Gastrocnemius medialis (tissue), 4 donors: ENCODE measurements at regions of chr15 and their contacts with region 1.

Region 1: GRCh38 chr15:71443538-71443937 is 328.3 kb downstream of the THSD4 start:
- DNase-seq: peak in 1 of 2 donors; percentile 21
- ATAC-seq: peak in 1 of 2 donors; percentile 21
- H3K4me3 ChIP-seq: no peak overlapping the region
- H3K27ac ChIP-seq: no peak overlapping the region
- H3K4me1 ChIP-seq: peaks cover 0 to 3% of the 10 kb centered on the region in 2 donors
- H3K27me3 ChIP-seq: no peaks in the 10 kb centered on the region
- CTCF ChIP-seq: peak; percentile 63 to 85 (median 72)
- POLR2A ChIP-seq: no peak

Region 2: DNA sequence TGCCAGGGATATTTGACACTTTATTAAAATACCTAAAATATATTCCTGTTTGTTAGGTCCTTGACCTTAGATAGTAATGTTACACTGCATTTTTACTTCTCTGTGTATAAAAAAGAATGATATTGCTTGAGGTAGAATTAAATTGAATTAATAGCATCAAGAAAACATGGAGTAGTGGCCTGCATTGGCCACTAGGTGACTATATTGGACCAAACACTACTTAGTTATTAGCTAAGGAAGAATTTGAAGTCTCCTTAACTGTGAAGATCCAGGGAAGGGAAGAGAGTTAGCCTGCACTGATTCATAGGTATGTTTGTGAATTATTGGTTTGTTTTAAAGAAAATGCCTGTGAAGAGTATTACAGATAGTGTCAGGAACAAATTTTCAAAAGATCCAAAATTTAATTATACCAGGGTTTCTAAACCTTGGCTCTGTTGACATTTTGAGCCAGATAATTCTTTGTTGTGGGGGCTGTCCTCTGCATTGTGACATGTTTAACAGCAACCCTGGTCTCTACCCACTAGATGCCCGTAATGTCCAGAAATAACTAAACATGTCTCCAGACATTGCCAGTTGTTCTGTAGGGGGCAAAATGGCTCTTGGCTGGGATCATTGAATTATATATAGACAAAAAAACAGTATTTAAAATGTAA is 431.9 kb before region 1 on chr15:
- in situ Hi-C with region 1: no loop called
- intact Hi-C with region 1: loop called (anchors 2 kb)
- DNase-seq: no peak
- ATAC-seq: no peak
- H3K4me3 ChIP-seq: no peak overlapping the region
- H3K27ac ChIP-seq: no peak overlapping the region
- H3K4me1 ChIP-seq: no peaks in the 10 kb centered on the region
- H3K27me3 ChIP-seq: no peaks in the 10 kb centered on the region
- CTCF ChIP-seq: peak; percentile 21 to 61 (median 37)
- POLR2A ChIP-seq: no peak

Region 3: DNA sequence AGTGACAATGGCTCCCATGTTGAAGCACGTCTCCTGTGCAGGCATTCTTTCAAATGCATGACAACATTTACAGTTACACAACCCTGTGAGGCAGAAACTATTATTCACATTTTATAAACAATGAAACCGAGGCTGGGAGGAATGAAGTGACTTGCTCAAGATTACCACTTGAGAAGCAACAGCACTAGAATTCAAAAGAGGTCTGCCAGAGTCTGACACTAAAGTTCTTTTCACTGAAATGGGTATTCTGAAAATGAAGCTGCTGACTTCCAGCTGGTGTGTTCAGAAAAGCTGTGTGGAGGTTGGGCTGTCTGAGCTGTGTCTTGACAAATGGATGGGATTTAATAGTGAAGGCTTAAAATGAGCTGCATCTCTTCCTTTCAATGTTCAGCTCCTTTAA is 223.9 kb before region 1 on chr15:
- in situ Hi-C with region 1: no loop called
- intact Hi-C with region 1: loop called (anchors 5 kb)
- DNase-seq: no peak
- ATAC-seq: no peak
- H3K4me3 ChIP-seq: no peak overlapping the region
- H3K27ac ChIP-seq: no peak overlapping the region
- H3K4me1 ChIP-seq: no peaks in the 10 kb centered on the region
- H3K27me3 ChIP-seq: no peaks in the 10 kb centered on the region
- CTCF ChIP-seq: no peak
- POLR2A ChIP-seq: no peak

Region 4: DNA sequence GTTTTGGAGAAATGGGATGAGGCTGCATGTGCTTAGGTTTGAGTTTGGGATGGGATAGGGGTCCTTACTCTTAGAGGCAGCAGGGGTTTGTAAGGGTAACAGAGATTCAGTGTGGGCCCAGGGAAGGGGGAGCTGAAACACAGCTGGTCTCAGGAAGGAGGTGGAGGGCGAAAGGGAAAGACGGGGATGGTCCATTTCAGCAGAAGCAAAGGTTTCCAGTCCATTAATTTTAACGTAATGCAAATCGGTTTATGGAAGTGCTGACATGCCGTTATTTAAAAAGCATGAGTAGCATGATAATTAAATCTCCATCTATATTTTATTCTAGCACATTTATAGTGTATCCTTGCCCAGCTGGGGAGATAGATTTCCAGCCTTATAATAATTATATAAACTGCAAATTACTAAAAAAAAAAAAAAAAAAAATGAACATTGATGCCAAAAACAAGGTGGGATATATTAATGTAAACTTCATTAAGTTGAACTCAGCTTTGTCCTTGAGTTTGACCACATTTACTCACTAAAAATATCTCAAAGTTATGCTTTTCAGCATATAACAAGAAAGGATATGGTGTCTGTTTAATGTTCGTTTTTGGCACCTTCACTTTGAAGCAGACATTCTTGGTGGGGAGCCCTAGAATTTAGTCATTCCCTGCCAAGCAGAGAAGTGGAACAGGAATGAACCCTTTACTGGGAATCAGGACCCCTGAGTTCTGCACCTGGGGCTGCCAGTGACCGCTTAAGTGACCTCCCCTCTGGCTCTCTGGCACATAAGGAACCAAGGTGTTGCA is 93.6 kb before region 1 on chr15:
- in situ Hi-C with region 1: no loop called
- intact Hi-C with region 1: no loop called
- DNase-seq: no peak
- ATAC-seq: no peak
- H3K4me3 ChIP-seq: no peak overlapping the region
- H3K27ac ChIP-seq: no peak overlapping the region
- H3K4me1 ChIP-seq: peaks cover 0 to 4% of the 10 kb centered on the region in 2 donors
- H3K27me3 ChIP-seq: no peaks in the 10 kb centered on the region
- CTCF ChIP-seq: no peak
- POLR2A ChIP-seq: no peak

Region 5: GRCh38 chr15:71386448-71387236 is 56.9 kb before region 1 on chr15:
- in situ Hi-C with region 1: loop called in 2 of 4 experiments (anchors 5 to 10 kb)
- intact Hi-C with region 1: loop called (anchors 2 kb)
- DNase-seq: no peak
- ATAC-seq: peak in 1 of 2 donors; percentile 58
- H3K4me3 ChIP-seq: no peak overlapping the region
- H3K27ac ChIP-seq: peak overlapping the region in 1 of 4 donors; percentile 57
- H3K4me1 ChIP-seq: peaks cover 22 to 27% of the 10 kb centered on the region in 2 donors
- H3K27me3 ChIP-seq: no peaks in the 10 kb centered on the region
- CTCF ChIP-seq: peak; percentile 28 to 64 (median 47)
- POLR2A ChIP-seq: no peak